Activated T-helper 1 cell treated with anti-CD3 and anti-CD28 coated beads, Interleukin-12 subunit alpha, Interleukin-12 subunit beta, Interleukin-2, Interleukin-4 antibody, amounts not matched to agents 30 ng/mL and 10 ng/mL and 1 ng/mL, durations not matched to agents 14 hours and 24 hours and 36 hours (primary cell): ENCODE measurements at regions of chr4 and their contacts with region 1.

Region 1: DNA sequence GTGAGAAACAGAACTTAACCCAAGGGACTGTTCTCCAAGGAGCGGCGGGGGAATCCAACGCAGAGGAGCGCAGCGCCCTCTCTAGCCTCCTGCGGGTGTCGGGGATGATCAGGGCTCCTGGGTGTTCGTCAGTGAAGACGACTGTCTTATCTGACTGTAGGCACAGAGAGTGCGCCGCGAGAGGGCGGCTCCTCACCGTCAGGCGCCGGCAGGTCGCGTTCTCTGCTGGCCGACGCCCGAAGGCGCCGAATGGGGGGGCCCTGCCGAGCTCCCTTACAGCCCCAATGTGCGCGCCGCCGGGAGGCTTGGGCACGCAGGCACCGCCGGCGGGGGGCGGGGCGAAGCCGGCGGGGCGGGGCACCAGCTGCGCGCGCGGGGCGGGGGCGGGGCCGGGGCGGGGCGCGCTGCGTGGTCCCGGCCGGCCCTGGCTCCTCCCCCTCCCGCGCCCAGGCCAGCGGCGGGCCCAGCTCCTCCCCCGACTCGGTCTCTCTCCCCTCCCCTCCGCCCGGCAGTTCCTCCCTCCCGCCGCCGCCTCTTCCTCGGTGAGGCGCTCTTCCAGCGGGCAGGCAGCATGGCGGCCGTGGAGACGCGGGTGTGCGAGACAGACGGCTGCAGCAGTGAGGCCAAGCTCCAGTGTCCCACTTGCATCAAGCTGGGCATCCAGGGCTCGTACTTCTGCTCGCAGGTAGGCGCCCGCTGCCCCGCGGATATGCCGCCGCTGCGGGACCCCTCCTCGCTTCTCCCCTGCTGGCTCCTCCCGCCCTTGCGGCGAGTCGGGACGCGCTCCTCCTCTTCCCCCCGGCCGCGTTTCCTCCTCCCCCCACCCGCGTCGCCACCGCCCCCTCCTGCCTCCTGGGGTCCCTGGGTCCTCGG is at the start of gene METAP1:
- DNase-seq: peak; percentile 94
- H3K4me3 Mint-ChIP-seq: peak within 1 kb of the TSS; percentile 91
- H3K27ac Mint-ChIP-seq: peak within 1 kb of the TSS; percentile 99
- H3K4me1 Mint-ChIP-seq: peaks cover 33% of the 10 kb centered on the region
- H3K27me3 Mint-ChIP-seq: no peaks in the 10 kb centered on the region
- total RNA-seq, gene METAP1: 58.1 and 61.3 TPM in 2 replicates

Region 2: DNA sequence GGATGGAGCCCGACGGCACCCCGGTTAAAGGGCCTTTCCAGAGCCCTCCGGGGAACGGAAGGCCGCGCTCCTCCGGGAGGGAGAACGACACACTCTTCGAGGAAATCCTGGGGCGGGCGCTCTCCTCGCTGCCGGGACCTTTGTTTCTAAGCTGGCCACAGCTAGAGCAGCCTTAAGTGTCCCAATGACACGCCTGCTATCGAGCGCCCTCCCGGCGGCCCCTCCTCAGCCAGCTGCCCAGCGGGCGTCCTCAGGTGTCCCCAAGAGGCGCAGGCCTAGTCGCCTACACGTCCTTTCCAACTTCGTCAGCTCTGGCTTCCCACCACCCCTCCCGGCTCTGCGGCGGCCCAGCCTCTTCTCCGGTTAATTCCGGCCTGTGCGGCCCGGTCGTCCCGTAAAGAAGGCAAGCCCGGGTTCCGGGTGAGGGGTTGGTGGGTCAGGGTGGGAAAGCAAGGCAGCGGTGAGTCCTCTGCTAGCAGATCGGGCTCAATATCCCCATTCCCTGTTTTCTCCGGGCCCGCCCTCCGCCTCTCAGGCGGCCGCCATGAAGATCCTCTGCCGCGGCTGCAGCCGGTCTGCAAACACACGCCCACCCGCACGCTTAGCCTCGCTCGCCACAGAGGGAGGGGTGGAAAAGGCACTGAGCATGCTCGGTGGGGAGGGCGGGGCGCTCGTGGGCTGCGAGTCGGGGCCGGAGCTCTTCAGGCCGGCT is 734.7 kb before region 1 on chr4:
- intact Hi-C with region 1: loop called (anchors 1 kb)
- DNase-seq: peak; percentile 89
- H3K4me3 Mint-ChIP-seq: peak overlapping the region; percentile 96
- H3K27ac Mint-ChIP-seq: peak overlapping the region; percentile 97
- H3K4me1 Mint-ChIP-seq: peaks cover 55% of the 10 kb centered on the region
- H3K27me3 Mint-ChIP-seq: no peaks in the 10 kb centered on the region

Region 3: DNA sequence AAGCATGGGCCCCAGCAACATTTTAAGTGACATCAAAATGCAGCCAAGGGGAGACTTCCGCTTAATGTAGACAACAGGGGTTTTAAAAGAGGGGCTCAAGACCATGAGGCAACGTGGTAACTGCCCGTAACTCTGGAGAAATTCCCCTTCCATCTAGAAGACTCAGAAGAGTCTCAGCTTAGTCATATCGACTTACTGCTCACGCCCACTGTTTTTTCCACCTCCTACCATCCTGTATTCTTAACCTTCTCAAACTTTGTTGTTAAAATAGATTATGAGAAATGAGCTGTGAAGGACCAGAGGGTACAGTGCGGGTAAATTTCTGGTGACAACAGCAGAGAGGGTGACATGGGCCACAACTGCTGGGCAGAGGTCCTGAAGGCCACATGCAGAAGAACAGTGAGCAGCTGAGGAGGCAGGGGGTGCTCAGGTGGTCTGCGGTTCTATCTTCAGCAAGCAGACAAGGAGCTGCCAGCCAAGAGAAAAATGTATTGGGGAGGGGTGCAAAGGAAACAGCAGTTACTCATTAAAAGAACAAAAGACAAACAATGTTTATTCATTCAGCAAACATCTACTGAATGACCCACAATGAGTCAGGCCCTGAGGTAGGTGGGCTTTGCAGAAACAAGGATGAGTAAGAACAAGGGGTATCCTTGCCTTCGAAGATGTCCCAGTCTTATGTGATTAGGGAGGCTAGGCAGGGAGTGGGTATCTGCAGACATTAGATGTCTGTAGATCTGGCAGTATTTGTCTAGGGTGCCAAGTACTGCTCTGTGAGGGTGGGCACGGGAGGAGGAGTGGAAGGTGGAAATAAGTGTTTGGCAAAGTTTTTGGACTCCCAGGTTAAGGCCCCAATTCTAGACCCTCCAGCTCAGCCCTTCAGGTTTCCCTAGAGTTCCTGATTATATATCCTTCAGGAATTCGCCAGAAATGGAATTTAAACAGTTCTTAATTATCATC is 512.3 kb before region 1 on chr4:
- intact Hi-C with region 1: loop called (anchors 5 kb)
- DNase-seq: peak; percentile 40
- H3K4me3 Mint-ChIP-seq: peak overlapping the region; percentile 72
- H3K27ac Mint-ChIP-seq: peak overlapping the region; percentile 98
- H3K4me1 Mint-ChIP-seq: peaks cover 92% of the 10 kb centered on the region
- H3K27me3 Mint-ChIP-seq: no peaks in the 10 kb centered on the region

Region 4: DNA sequence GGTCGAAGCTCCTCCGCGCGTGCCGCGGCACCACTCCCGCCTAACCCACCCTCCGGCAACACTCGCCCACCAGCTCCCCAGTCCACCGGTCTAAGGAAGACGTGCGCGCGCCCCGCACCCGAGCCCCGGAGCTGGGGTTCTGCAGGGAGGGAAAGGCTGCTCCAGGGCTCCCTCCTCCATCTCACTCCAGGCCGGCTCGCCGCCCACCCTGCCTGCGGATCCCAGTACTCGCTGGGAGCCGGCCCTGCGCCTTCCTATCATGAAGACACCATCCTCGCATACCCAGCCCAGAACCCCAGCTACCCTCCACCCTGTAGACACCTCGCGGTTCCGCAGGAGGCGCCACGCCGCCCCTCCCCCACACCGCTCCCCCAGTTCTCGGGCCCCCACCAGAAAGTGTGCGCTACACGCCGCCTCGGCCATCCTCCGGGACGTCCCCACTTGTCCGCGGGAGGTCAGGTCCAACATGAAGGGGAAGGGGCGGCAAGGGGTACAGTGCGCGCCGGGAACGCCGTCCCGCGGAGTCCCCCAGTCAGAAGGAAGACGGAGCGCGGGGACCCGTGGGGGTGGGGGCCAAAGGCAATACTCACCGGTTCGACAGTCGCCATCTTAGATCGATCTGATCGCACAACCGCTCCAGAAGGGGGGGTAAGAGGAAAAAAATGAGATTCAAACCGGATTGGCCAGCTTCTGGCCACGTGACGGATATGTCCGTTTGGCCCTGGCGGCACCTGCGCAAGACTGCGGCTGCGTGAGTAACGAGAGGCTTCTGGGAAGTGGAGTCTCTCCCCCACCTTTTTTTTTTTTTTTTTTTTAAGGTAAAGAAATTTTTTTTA is 66.7 kb before region 1 on chr4 and contains the start of gene EIF4E:
- intact Hi-C with region 1: loop called (anchors 1 kb)
- DNase-seq: peak; percentile 96
- H3K4me3 Mint-ChIP-seq: peak within 1 kb of the TSS; percentile 98
- H3K27ac Mint-ChIP-seq: peak within 1 kb of the TSS; percentile 100
- H3K4me1 Mint-ChIP-seq: peaks cover 46% of the 10 kb centered on the region
- H3K27me3 Mint-ChIP-seq: no peaks in the 10 kb centered on the region
- total RNA-seq, gene EIF4E: 137 and 147 TPM in 2 replicates

Region 5: DNA sequence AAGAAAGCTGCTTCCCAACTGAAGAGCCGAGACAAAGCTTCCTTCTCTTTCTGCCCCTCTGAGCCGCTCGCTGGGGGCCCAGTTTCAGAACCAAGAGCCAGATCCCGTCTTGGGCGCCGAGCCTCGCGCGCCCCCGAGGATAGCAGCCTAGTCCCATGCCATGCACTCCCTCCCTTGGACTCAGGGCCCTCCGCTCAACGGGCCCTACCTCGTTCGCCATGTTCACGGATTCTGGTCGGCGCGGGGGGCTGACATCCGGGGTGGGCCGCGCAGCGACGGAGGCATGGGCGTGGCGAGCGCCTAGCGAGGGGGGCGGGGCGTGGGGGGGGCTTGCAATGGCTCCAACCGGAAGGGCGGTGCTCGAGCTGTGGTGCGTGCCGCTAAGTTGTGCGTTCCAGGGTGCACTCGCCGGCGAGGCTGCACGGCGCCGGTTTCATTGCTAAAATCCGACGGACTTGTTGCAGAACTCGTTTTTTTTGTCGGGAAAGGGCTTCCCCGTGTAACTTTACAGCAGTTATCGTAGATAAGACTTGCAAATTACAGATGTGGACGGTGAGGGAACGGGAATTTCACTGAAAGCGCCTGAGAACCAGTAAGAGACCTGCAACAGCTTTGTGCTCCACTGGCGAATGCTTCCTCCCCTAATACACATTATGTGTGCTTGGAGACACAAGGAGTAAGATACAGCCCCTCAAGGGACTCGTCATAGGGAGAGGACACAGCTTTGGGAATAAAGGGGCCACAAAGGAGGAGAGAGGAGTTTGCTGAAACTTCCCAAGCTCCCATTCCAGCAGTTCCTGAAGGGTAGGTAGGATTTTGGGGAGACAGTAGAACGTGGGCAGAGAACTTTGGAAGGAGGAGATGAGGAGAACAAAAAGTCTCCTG is 93.3 kb after region 1 on chr4 and contains the start of gene ADH5:
- intact Hi-C with region 1: loop called (anchors 1 kb)
- DNase-seq: peak; percentile 77
- H3K4me3 Mint-ChIP-seq: peak within 1 kb of the TSS; percentile 98
- H3K27ac Mint-ChIP-seq: peak within 1 kb of the TSS; percentile 98
- H3K4me1 Mint-ChIP-seq: peaks cover 50% of the 10 kb centered on the region
- H3K27me3 Mint-ChIP-seq: peaks cover 2% of the 10 kb centered on the region
- total RNA-seq, gene ADH5: 68.8 and 74.9 TPM in 2 replicates

Region 6: GRCh38 chr4:99816545-99817308 is 821.3 kb after region 1 on chr4 and contains the start of gene DAPP1:
- intact Hi-C with region 1: loop called (anchors 5 kb)
- DNase-seq: peak; percentile 79
- H3K4me3 Mint-ChIP-seq: peak within 1 kb of the TSS; percentile 92
- H3K27ac Mint-ChIP-seq: peak within 1 kb of the TSS; percentile 77
- H3K4me1 Mint-ChIP-seq: peaks cover 76% of the 10 kb centered on the region
- H3K27me3 Mint-ChIP-seq: no peaks in the 10 kb centered on the region
- total RNA-seq, gene DAPP1: 38.8 and 40.2 TPM in 2 replicates